Natural killer cell (primary cell): ENCODE measurements at regions of chr16 and their contacts with region 1.

Region 1: DNA sequence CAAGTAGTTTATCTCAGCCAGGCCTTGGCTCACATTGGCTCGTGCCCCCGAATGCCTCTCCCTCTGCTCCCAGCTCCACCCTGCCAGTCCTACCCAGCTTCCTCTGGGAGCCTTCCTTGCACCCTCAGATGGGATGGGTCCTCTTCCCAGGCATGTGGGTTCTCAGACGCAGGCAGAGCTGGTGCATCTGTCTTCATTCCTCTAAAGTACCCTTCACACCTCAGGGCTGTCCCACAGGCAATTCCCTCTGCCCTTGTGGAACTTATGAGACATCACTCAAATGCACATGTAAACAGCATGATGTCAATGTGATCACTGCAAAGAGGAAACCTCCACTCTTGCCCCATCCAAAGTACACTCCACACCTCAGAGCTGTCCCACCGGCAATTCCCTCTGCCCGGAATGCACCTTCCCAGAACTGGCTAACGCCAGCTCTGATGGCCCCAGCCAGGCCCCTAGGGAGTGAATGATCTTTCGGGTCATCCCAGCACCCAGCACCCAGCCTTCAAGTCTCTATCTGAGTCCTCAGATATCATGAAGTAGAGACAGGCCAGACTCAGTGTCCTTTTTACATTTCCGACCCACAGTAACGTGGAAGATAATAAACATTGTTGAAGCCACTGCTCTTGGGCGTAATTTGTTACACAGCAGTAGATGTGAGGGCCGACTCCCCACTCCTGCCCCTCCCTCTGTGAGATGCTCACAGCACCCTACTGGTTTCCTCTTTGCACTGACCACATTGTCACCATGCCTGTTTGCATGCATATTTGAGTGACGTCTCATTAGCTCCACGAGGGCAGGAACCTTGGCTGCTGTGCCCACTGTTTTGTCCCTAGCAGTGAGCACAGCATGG is 85.4 kb downstream of the N4BP1 start:
- DNase-seq: peak in 1 of 2 donors; percentile 41
- ATAC-seq: peak; percentile 88 to 98 (median 95)
- H3K4me3 ChIP-seq: no peak overlapping the region
- H3K4me3 Mint-ChIP-seq: peak overlapping the region; percentile 79
- H3K27ac ChIP-seq: peak overlapping the region; percentile 57
- H3K27ac Mint-ChIP-seq: peak overlapping the region; percentile 83 to 95
- H3K4me1 ChIP-seq: peaks cover 20% of the 10 kb centered on the region
- H3K4me1 Mint-ChIP-seq: peaks cover 25 to 28% of the 10 kb centered on the region in 2 donors
- H3K27me3 ChIP-seq: no peaks in the 10 kb centered on the region
- H3K27me3 Mint-ChIP-seq: no peaks in the 10 kb centered on the region
- CTCF ChIP-seq: no peak

Region 2: GRCh38 chr16:48459167-48459566 is 65.4 kb before region 1 on chr16:
- intact Hi-C with region 1: loop called (anchors 2 kb)
- DNase-seq: no peak
- ATAC-seq: no peak
- H3K4me3 ChIP-seq: no peak overlapping the region
- H3K4me3 Mint-ChIP-seq: peak overlapping the region; percentile 73
- H3K27ac ChIP-seq: peak overlapping the region; percentile 68
- H3K27ac Mint-ChIP-seq: peak overlapping the region; percentile 81 to 88
- H3K4me1 ChIP-seq: peaks cover 17% of the 10 kb centered on the region
- H3K4me1 Mint-ChIP-seq: peaks cover 29 to 42% of the 10 kb centered on the region in 2 donors
- H3K27me3 ChIP-seq: no peaks in the 10 kb centered on the region
- H3K27me3 Mint-ChIP-seq: peaks cover 0 to 7% of the 10 kb centered on the region in 2 donors
- CTCF ChIP-seq: no peak

Region 3: DNA sequence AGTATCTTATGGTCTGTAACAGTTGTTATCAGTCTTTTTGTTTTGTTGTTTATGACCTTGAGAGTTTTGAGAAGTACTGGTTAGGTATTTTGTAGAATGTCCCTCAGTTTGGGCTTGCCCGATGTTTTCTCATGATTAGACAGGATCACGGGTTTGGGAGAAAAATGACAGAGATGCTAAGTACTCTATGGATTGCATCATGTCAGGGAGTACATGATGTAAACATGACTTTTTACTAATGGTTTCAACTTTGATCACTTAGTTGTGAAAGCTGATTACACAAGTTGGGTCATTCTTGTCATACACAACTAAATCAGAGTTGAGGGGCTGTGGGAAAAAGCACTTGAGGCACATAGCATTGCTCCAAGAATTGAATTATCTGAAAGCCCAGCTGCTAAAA is 44.6 kb before region 1 on chr16:
- intact Hi-C with region 1: no loop called
- DNase-seq: no peak
- ATAC-seq: no peak
- H3K4me3 ChIP-seq: no peak overlapping the region
- H3K4me3 Mint-ChIP-seq: no peak overlapping the region
- H3K27ac ChIP-seq: no peak overlapping the region
- H3K27ac Mint-ChIP-seq: no peak overlapping the region
- H3K4me1 ChIP-seq: no peaks in the 10 kb centered on the region
- H3K4me1 Mint-ChIP-seq: no peaks in the 10 kb centered on the region
- H3K27me3 ChIP-seq: no peaks in the 10 kb centered on the region
- H3K27me3 Mint-ChIP-seq: peaks cover 0 to 13% of the 10 kb centered on the region in 2 donors
- CTCF ChIP-seq: no peak

Region 4: DNA sequence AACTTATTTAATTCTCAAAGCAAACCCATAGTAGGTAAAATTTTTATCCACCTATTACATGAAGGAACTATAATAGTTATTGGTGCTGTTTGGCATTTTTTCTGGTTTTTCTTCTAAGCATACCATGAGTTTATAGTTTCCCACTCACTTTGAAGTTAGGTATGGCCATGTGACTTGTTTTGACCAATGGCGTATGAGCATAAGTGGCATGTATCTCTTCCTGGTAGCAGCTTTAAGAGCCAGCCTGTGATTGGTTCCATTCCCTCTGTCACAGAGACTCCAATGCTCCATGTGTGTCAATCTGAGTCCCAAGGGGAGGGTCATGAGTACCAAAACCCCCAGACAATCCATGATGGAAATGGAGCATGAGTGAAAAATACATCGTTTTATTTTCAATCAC is 368.3 kb after region 1 on chr16:
- intact Hi-C with region 1: no loop called
- DNase-seq: no peak
- ATAC-seq: no peak
- H3K4me3 ChIP-seq: no peak overlapping the region
- H3K4me3 Mint-ChIP-seq: no peak overlapping the region
- H3K27ac ChIP-seq: no peak overlapping the region
- H3K27ac Mint-ChIP-seq: no peak overlapping the region
- H3K4me1 ChIP-seq: no peaks in the 10 kb centered on the region
- H3K4me1 Mint-ChIP-seq: no peaks in the 10 kb centered on the region
- H3K27me3 ChIP-seq: no peaks in the 10 kb centered on the region
- H3K27me3 Mint-ChIP-seq: no peaks in the 10 kb centered on the region
- CTCF ChIP-seq: no peak

Region 5: GRCh38 chr16:49000594-49000993 is 476.0 kb after region 1 on chr16:
- intact Hi-C with region 1: no loop called
- DNase-seq: no peak
- ATAC-seq: no peak
- H3K4me3 ChIP-seq: no peak overlapping the region
- H3K4me3 Mint-ChIP-seq: no peak overlapping the region
- H3K27ac ChIP-seq: no peak overlapping the region
- H3K27ac Mint-ChIP-seq: no peak overlapping the region
- H3K4me1 ChIP-seq: no peaks in the 10 kb centered on the region
- H3K4me1 Mint-ChIP-seq: no peaks in the 10 kb centered on the region
- H3K27me3 ChIP-seq: no peaks in the 10 kb centered on the region
- H3K27me3 Mint-ChIP-seq: no peaks in the 10 kb centered on the region
- CTCF ChIP-seq: no peak